ENCODE measurements at regions of chr20 and their contacts with region 1.

Region 1: DNA sequence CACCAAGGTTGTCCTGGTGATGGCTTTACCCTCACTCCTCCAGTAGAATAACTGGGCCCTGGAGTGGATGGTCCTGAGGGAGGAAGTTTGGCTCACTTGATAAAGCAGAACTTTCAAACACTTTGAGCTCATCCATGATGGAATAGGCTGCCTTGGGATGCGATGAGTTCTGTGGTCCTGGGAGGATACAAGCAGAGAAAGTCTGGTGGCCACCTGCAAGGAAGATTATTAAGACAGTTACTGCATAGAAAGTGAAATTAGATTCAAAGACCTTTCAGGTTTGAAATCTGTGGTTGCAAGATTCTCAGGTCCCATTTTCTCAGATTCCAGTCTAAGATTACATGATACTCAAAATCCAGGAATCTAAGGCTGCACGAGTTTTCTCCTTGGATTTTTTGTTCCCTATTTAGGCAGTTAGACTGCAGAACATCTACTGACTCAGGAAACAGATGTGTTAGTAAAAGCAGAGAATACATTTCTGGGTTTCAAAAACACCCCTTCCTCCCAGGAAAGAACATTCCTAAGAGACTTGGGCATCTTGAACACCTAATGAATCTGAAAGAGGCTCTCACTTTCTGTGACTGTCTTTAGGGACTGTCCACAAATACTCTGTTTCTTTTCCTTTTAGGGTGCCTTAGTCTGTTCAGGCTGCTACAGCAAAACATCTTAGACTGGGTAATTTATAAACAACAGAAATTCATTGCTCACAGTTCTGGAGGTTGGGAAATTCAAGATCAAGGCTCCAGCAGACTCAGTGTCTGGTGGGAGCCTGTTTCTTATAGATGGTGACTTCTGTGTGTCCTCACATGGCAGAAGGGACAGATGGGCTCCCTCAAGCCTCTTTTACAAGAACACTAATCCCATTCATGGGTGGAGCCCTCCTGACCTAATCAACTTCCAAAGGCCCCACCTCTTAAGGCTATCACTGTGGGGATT is 19.6 kb upstream of the CCN5 start:
- DNase-seq: no peak
- H3K4me3 ChIP-seq: no peak overlapping the region
- H3K27ac ChIP-seq: peak overlapping the region; percentile 78 to 83
- H3K4me1 ChIP-seq: peaks cover 0 to 3% of the 10 kb centered on the region in 2 donors
- H3K27me3 ChIP-seq: no peaks in the 10 kb centered on the region
- CTCF ChIP-seq: no peak
- POLR2A ChIP-seq: no peak

Region 2: GRCh38 chr20:43456809-43457639 is 1238.5 kb before region 1 on chr20:
- intact Hi-C with region 1: loop called (anchors 5 kb)
- DNase-seq: peak; percentile 91 to 93
- H3K4me3 ChIP-seq: peak overlapping the region; percentile 88 to 92 (median 90)
- H3K27ac ChIP-seq: peak overlapping the region; percentile 100
- H3K4me1 ChIP-seq: peaks cover 0 to 8% of the 10 kb centered on the region in 2 donors
- H3K27me3 ChIP-seq: no peaks in the 10 kb centered on the region
- CTCF ChIP-seq: no peak
- POLR2A ChIP-seq: no peak

Region 3: GRCh38 chr20:44637522-44638372 is 57.8 kb before region 1 on chr20:
- intact Hi-C with region 1: no loop called
- DNase-seq: no peak
- H3K4me3 ChIP-seq: no peak overlapping the region
- H3K27ac ChIP-seq: peak overlapping the region in 1 of 2 donors; percentile 52
- H3K4me1 ChIP-seq: peaks cover 3% of the 10 kb centered on the region in 2 donors
- H3K27me3 ChIP-seq: no peaks in the 10 kb centered on the region
- CTCF ChIP-seq: no peak
- POLR2A ChIP-seq: no peak

Measured in breast epithelium (tissue), 4 donors.